AG04450 (cell line): ENCODE measurements at regions of chr11 and their contacts with region 1.

Region 1: DNA sequence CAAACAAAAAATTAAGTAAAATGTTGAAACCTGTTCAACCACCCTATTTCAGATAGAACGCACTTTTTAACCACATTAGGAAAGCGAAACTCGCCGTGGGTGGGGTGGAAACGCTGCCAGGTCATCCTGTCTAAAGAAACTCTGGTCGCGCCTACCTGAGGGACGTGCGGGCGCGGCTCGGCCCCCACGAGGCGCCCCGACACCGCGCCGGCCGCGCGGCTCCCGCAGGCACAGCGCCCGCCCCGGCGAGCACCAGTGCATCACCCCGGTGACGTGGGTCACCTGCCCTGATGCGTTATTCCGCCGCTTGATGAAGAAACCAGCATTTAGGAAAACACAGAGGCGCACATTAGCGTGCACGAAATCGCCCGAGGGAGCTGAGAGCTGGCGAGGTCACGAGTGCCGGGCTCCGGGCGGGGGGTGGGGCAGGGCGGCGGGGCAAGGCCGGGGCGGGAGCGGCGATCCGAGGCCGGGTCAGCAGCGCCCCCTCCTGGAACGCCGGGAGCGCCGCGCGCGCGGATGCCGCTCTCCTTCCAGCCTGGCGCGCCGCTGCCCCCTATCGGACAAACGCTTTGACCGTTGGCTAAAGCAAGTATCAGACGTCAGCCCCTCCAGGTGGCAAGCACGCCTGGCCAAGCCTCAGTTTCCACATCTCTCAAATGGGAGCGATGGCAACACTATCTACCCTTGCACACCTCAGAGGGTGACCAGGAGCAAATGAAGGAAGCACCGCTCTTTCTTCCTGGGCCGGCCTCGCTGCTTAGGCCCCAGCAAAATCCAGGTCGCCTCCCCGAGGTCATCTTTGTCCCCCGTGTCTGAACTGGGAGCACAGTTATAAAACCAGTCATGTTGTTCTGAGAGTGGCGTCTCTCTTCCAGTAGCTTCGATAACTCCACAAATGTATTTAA is 15.7 kb upstream of the SNX32 start:
- DNase-seq: peak; percentile 55
- H3K4me3 ChIP-seq: peak overlapping the region; percentile 77
- H3K27ac ChIP-seq: no peak overlapping the region
- H3K27me3 ChIP-seq: peaks cover 13% of the 10 kb centered on the region
- CTCF ChIP-seq: peak; percentile 93

Region 2: DNA sequence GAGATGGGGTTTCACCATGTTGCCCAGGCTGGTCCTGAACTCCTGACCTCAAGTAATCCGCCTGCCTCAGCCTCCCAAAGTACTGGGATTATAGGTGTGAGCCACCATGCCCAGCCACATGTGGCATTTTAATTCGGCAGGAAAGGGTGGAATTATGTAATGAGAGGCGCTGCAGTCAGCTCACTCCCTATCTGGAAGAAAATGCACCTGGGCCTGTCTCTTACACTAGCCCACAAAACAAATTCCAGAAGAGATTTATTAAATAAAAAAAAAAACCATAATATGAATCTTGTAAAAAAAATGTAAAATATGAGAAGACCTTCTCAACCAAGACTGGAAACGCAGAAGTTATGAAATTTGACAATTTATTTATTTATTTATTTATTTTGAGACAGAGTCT is 114.2 kb before region 1 on chr11:
- CTCF ChIA-PET with region 1: interaction called, 35 read pairs
- POLR2A ChIA-PET with region 1: no interaction called
- DNase-seq: no peak
- H3K4me3 ChIP-seq: no peak overlapping the region
- H3K27ac ChIP-seq: no peak overlapping the region
- H3K27me3 ChIP-seq: peaks cover 36% of the 10 kb centered on the region
- CTCF ChIP-seq: no peak

Region 3: GRCh38 chr11:65779851-65780577 is 38.1 kb before region 1 on chr11:
- CTCF ChIA-PET with region 1: interaction called, 22 read pairs
- POLR2A ChIA-PET with region 1: interaction called, 3 read pairs
- DNase-seq: peak; percentile 11
- H3K4me3 ChIP-seq: peak overlapping the region; percentile 79
- H3K27ac ChIP-seq: no peak overlapping the region
- H3K27me3 ChIP-seq: peaks cover 14% of the 10 kb centered on the region
- CTCF ChIP-seq: peak; percentile 66